Activated CD8-positive, alpha-beta memory T cell treated with anti-CD3 and anti-CD28 coated beads, Interleukin-2, amount 10 ng/mL, durations not matched to agents 7 days and 5 days (primary cell): ENCODE measurements at regions of chr5 and their contacts with region 1.

Region 1: DNA sequence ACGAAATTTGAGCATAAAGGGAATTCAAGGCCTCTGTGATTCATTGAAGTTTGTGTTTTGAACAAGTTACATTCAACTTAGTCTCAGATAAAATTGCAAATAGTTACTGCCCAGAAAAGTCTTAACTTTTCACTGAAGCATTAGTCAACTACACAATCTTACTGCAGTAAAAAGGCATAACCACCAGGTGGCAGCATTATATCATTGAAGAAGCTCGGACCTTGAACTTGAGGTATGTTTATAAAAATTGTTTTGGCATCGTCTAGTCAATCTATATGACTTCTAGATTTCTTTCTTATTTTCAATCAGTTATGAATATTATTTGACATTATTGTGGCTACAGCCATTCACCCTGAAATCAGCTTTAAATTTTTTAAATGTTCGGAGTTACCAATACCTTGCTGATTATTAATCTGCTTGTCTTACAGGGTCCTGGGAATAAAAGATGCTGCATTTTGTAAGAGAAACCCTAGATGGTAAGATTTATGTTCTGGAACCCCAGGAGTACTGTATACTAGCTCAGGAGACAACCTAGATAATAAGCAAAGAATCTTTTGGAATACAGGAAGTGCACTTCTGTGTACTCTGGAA is 83.9 kb upstream of the GRAMD2B start:
- DNase-seq: peak; percentile 50
- ATAC-seq: peak; percentile 42
- H3K4me3 Mint-ChIP-seq: no peak overlapping the region
- H3K27ac Mint-ChIP-seq: no peak overlapping the region
- H3K4me1 Mint-ChIP-seq: no peaks in the 10 kb centered on the region
- H3K27me3 Mint-ChIP-seq: peaks cover 16% of the 10 kb centered on the region

Region 2: DNA sequence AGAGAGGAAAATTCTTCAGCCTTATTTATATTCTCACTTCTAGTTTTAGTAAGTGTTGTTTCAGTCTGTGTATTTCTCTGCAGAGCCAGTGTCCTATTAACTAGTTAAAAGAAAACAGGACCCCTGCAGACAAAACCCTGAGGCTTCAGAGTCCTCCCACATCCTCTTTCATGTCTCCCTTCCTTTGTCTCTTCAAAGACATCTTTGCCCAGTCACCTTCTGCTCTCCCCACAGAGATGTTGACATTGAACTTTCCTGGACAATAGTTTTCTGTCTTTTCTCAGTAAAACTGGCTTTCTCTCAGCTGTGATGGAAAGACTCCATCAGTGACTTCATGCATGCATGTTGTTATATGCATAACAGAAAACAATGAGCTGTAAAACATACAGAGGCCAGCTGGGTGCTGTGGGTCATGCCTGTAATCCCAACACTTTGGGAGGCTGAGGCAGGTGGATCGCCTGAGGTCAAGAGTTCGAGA is 104.1 kb after region 1 on chr5:
- CTCF ChIA-PET with region 1: no interaction called
- DNase-seq: peak; percentile 45
- ATAC-seq: peak; percentile 38
- H3K4me3 Mint-ChIP-seq: no peak overlapping the region
- H3K27ac Mint-ChIP-seq: peak overlapping the region; percentile 58
- H3K4me1 Mint-ChIP-seq: peaks cover 52% of the 10 kb centered on the region
- H3K27me3 Mint-ChIP-seq: no peaks in the 10 kb centered on the region

Region 3: GRCh38 chr5:126499853-126500342 is 160.6 kb after region 1 on chr5:
- CTCF ChIA-PET with region 1: interaction called, 23 read pairs
- DNase-seq: no peak
- ATAC-seq: peak; percentile 57
- H3K4me3 Mint-ChIP-seq: no peak overlapping the region
- H3K27ac Mint-ChIP-seq: no peak overlapping the region
- H3K4me1 Mint-ChIP-seq: peaks cover 4% of the 10 kb centered on the region
- H3K27me3 Mint-ChIP-seq: no peaks in the 10 kb centered on the region

Region 4: DNA sequence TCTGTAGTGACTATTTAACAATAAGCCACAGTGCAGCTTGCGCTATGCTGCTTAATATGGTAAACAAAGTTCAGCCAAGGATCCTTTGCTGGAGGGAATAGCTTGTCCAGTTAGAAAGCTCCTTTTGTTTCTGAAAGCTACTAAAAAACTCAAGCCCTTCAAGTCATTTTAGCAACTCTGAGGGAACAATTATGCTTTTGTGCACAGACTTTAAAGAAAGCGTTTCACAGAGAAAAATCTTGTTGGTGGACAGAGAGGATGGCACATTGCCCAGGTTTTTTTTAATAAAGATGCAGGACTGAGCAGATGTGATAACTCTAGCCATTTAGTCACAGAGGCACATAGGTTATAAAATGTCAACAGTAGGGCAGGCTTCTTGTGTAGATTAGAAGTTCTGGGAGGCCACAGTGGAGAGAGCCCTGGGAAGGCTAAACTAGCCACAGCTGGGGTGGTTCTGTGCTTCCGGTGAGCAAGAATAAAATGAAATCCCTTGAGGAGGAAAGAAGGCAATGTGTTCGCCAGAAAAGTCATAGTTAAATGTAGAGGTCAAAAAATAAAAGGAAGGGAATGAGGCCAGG is 192.3 kb after region 1 on chr5:
- CTCF ChIA-PET with region 1: interaction called, 10 read pairs
- DNase-seq: no peak
- ATAC-seq: no peak
- H3K4me3 Mint-ChIP-seq: no peak overlapping the region
- H3K27ac Mint-ChIP-seq: no peak overlapping the region
- H3K4me1 Mint-ChIP-seq: no peaks in the 10 kb centered on the region
- H3K27me3 Mint-ChIP-seq: no peaks in the 10 kb centered on the region

Region 5: DNA sequence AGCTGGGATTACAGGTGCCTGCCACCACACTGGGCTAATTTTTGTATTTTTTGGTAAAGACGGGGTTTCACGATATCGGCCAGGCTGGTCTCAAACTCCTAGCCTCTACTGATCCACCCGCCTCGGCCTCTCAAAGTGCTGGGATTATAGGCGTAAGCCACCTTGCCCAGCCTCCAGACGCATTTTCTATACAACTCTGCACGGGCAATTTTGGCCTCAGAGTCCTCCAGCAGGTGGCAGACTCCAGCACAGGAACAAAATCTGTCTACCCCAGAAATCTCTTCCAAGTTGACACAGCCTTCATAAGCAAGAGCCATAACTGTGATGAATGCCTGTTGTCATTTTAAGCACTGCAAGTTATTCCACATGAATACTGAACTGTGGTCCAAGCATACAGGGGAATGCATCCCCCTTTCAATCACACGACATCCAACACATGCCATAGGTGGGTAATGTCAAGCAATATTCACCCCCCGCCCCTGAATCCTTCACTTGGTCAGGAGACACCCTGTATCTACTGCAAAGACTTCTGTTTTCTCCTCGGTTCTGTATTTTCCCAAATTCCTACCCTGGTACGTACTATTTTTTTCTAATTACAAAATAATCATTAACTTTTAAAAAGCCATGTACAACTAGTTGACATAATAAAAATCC is 204.9 kb after region 1 on chr5:
- CTCF ChIA-PET with region 1: interaction called, 49 read pairs
- DNase-seq: peak; percentile 58
- ATAC-seq: peak; percentile 39
- H3K4me3 Mint-ChIP-seq: no peak overlapping the region
- H3K27ac Mint-ChIP-seq: no peak overlapping the region
- H3K4me1 Mint-ChIP-seq: peaks cover 2% of the 10 kb centered on the region
- H3K27me3 Mint-ChIP-seq: peaks cover 9% of the 10 kb centered on the region

Region 6: DNA sequence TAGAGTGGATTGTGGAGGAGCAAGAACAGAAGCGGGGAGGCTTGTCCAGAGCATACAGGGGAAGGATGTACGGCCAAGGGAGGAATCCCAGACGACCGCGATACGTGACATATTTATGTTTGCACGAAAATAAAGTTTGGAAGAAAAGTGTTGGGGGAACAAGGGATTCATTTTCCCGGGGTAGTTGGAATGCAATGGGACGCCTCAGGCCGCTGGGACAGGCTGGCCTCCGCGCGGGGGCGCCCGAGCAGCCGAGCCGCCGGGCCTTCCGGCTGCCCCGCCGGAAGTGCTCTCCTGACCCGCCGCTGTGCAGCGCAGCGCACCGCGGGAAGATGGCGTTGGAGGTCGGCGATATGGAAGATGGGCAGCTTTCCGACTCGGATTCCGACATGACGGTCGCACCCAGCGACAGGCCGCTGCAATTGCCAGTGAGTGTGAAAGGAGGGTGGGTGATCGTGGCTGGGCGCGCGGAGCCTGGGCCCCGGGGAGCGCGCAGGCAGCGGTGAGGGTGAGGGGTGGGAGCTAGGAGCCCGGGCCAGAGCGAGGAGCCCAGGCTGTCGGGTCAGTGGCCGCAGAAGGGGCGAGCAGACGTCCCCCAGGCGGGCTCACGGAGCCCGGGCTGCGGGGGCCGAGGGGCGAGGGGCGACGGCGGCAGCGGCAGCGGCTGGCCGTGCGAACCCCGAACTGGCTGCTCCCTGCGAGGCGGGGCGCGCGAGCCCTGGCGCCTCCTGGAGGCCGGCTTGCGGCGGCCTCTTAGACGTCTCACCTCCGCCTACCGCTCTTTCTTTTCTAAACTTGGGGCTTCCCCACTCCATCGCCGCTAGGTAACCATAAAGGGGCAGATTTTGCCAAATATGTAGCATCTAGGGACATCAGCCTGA is 261.6 kb after region 1 on chr5 and contains the start of gene PHAX:
- CTCF ChIA-PET with region 1: interaction called, 12 read pairs
- DNase-seq: peak; percentile 81
- ATAC-seq: peak; percentile 94
- H3K4me3 Mint-ChIP-seq: peak within 1 kb of the TSS; percentile 98
- H3K27ac Mint-ChIP-seq: peak within 1 kb of the TSS; percentile 94
- H3K4me1 Mint-ChIP-seq: peaks cover 32% of the 10 kb centered on the region
- H3K27me3 Mint-ChIP-seq: peaks cover 2% of the 10 kb centered on the region
- total RNA-seq, gene PHAX: 35.6 to 47.1 TPM